SK-N-SH (cell line): ENCODE measurements at regions of chr5 and their contacts with region 1.

Region 1: DNA sequence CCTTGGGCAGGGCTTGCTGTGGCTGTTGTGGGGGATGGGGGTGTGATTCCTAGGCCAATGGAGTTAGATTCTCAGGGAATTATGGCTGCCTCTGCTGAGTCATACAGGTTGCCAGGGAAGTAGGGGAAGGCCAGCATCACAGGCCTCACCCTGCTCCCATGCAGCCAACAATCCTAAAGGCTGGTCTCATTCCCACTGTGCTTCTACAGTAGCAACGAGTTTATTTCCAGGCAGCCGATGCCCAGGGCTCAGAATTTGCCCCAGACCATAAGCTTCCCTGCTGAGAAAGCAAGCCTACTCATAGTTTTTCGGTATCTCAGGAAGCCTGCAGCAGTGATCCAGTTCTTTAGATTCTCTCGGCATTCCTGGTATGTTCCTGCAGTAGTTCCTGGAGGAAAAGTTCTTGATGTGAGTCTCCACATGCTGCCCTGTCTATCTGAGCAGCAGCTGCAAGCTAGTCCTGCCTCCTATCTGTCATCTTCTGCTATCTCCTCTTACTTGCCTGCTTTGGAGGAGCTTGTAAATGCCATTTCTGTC is 59.3 kb upstream of the SELENOP start:
- DNase-seq: no peak
- H3K4me3 ChIP-seq: no peak overlapping the region
- H3K27ac ChIP-seq: no peak overlapping the region
- H3K4me1 ChIP-seq: no peaks in the 10 kb centered on the region
- H3K27me3 ChIP-seq: peaks cover 4% of the 10 kb centered on the region; the same call in 1 of the 2 replicates
- CTCF ChIP-seq: no peak
- EP300 ChIP-seq: no peak
- RAD21 ChIP-seq: no peak

Region 2: DNA sequence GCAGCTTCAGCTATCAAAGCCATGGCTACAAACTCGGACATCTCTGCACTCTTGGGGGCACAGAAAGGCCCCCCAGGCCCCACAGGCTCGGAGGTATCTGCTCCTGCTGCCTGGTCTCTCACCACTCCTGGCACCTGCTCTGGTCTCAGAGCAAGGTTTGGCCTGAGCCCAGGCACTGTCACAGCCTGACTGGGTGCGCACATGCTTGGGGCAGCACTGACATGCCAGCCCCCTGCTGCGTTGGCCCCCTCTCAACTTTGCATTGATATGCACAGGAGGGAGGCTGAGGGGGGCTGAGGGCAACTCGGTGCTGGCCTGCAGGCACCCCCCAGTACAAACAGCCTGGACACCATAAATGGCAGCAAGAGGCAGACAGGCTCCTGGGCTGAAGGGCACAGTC is 474.8 kb before region 1 on chr5:
- CTCF ChIA-PET with region 1: no interaction called
- POLR2A ChIA-PET with region 1: no interaction called
- DNase-seq: no peak
- H3K4me3 ChIP-seq: no peak overlapping the region
- H3K27ac ChIP-seq: no peak overlapping the region
- H3K4me1 ChIP-seq: no peaks in the 10 kb centered on the region
- H3K27me3 ChIP-seq: no peaks in the 10 kb centered on the region
- CTCF ChIP-seq: no peak
- EP300 ChIP-seq: no peak
- RAD21 ChIP-seq: no peak

Region 3: DNA sequence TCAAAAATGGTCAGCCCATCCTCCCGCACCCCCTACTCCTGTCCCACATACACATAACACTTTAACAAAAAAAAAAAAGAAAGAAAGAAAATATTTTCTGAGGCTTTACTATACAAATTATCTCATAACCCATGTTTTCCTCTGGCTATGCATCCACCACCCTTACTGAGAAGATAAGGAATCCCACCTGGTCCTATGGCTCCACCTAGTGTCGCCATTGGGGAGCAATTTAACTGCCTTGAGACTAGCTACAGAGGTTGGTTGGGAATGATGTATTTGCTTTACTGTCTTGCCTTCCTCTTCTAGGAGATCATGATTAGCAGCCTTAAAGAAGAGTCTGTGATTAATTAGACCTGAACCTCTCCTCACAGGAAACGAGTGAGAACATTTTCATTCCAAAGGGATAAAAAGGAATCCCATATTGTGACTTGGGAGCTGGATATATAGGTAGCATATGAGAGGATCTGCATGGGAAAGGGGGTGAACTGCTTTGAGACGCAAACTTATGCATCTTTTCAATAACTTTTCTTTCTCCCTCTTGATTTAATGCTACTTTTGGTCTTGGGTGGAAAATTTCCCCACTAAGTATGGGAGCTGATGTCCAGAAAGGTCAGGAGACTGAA is 18.5 kb after region 1 on chr5:
- CTCF ChIA-PET with region 1: interaction called, 12 read pairs
- POLR2A ChIA-PET with region 1: no interaction called
- DNase-seq: peak; percentile 57
- H3K4me3 ChIP-seq: no peak overlapping the region
- H3K27ac ChIP-seq: no peak overlapping the region
- H3K4me1 ChIP-seq: no peaks in the 10 kb centered on the region
- H3K27me3 ChIP-seq: peaks cover 19% of the 10 kb centered on the region; the same call in 1 of the 2 replicates
- CTCF ChIP-seq: peak; percentile 79
- EP300 ChIP-seq: no peak
- RAD21 ChIP-seq: peak; percentile 79